HEK293 (cell line): ENCODE measurements at regions of chr10 and their contacts with region 1.

Region 1: GRCh38 chr10:97542169-97543024 is 30.2 kb upstream of the ANKRD2 start:
- H3K4me3 ChIP-seq: no peak overlapping the region
- H3K27ac ChIP-seq: peak overlapping the region; percentile 64
- H3K4me1 ChIP-seq: peaks cover 8% of the 10 kb centered on the region; the same call in 1 of the 2 replicates
- CTCF ChIP-seq: no peak

Region 2: DNA sequence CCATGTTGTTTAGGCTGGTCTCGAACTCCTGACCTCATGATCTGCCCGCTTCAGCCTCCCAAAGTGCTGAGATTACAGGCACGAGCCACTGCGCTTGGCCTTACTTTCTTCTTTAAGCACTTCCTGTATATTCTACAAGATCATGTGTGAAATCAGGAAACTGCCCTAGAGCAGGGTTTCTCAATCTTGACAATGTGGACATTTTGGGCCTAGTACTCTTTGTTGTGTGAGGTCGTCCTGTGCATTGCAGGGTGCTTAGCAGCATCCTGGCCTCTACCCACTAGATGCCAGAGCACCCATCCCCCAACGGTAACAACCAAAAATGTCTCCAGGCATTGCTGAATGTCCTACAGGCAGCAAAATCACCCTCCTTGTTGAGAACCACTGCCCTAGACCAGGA is 166.0 kb before region 1 on chr10:
- CTCF ChIA-PET with region 1: no interaction called
- POLR2A ChIA-PET with region 1: no interaction called
- H3K4me3 ChIP-seq: no peak overlapping the region
- H3K27ac ChIP-seq: no peak overlapping the region
- H3K4me1 ChIP-seq: no peaks in the 10 kb centered on the region
- CTCF ChIP-seq: no peak

Region 3: DNA sequence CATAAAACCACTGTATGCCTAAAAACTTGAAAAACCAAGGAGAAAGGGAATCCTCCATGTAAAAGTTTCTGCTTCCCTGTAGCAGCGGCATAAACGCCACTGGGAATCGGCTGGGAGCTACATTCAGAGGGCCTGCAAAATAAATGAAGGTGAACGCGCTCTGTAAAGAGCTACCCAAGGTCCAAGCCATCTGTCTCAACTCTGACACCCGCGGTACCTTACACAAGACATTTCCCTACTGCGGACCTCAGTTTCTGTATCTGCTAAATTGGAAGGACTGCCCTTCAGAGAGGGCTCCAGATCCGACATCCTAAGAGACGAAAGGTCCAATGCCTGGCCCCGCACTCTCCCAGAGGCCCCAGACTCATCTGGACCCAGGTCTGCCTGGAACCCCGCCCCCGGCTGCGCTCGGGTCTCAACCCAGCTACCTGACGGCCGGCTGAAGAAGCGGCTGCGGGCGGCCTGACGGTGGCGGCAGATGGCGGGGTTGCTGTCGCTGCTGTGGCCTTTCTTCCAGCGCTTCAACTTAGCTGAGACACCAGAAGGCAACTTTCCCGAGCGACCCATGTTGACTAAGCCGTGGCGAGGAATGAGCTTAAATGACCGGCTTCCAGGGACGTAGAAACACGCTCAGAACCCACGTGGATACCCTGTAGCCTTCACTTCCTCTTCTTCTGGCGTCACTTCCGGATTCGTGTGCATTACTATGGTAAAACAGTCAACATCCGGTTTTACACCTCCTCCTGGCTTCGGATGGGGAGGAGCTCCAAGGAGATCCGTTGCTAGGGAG is 141.5 kb before region 1 on chr10 and contains the start of gene RRP12:
- CTCF ChIA-PET with region 1: no interaction called
- POLR2A ChIA-PET with region 1: no interaction called
- H3K4me3 ChIP-seq: peak within 1 kb of the TSS; percentile 79
- H3K27ac ChIP-seq: peak within 1 kb of the TSS; percentile 52
- H3K4me1 ChIP-seq: 0 out of 2 replicates have a peak, but pooled peaks cover 4% of the 10 kb centered on the region
- CTCF ChIP-seq: peak; percentile 58; the same call in 1 of the 2 replicates

Region 4: DNA sequence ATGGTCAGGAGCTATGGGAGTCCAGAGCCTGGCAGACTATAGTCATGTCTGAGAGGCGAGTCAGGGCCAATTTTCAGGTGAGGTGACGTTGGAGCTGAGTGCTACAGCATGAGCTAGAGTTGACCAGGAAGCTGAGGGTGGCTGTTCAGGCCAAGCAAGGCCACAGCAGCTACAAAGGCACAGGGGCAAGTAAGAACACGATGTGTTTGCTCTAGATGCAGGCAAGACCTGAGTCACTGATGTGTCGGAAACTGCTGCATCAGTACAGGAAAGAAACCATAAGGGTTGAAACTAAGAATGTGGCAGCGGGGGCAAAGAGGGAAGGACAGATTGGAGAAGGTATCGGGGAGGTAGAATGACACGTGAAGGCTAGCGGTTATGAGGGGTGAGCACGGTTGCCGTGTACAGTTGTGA is 129.5 kb before region 1 on chr10:
- CTCF ChIA-PET with region 1: no interaction called
- POLR2A ChIA-PET with region 1: no interaction called
- H3K4me3 ChIP-seq: no peak overlapping the region
- H3K27ac ChIP-seq: no peak overlapping the region
- H3K4me1 ChIP-seq: no peaks in the 10 kb centered on the region
- CTCF ChIP-seq: no peak

Region 5: GRCh38 chr10:99303899-99304861 is 1761.8 kb after region 1 on chr10:
- CTCF ChIA-PET with region 1: no interaction called
- POLR2A ChIA-PET with region 1: interaction called, 16 read pairs
- H3K4me3 ChIP-seq: no peak overlapping the region
- H3K27ac ChIP-seq: no peak overlapping the region
- H3K4me1 ChIP-seq: peaks cover 7% of the 10 kb centered on the region
- CTCF ChIP-seq: no peak